Right ventricle myocardium inferior (tissue), 1 donor: ENCODE measurements at regions of chr3 and their contacts with region 1.

Region 1: GRCh38 chr3:29642393-29643033 is 361.6 kb downstream of the RBMS3 start:
- DNase-seq: peak; percentile 45
- ATAC-seq: peak; percentile 87

Region 2: GRCh38 chr3:29324180-29324651 is 318.3 kb before region 1 on chr3:
- intact Hi-C with region 1: no loop called
- DNase-seq: peak; percentile 60
- ATAC-seq: peak; percentile 73

Region 3: DNA sequence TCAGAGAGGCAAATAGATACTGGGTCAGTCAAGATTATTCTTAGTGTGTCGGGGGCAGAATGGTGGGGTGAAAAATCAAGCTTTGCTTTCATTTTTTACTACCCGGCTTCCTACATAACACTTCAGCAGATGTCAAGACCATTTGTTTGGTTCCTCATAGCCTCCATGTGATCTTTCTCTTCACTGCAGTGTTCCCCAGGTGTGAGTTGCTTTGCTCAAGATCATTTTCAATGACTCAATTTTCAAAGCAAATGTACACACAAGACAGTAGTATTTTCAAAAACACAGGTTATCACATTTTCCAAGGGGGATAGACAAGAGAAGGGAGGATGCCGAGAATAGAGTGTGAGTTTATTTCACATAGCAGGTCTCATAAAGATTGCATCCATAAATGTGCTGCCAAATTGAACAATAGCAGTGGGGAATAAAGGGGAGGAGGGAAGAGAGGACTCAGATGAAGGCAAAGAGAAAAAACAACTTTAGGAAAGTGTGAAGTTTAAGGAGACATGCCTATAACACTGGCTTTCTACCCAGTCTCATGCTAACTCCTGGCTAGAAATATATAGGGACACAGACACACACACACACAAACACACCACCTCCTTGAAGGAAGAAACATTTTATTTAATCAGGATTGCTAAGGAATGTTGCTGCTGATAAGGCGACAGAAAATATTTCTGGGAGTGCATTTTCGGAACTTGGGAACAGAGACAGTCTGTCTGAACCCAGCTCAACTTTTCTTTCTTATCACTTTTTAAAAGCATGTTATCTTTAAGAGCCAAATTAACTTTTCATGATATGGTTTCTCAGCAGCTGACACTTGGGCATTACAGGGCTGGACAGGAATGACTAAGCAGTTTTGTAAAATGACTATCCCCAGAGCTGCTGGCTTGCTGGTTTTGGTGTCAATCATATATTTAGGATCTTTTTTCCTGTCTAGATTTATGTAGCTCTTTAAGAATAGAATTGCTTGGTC is 40.8 kb after region 1 on chr3:
- intact Hi-C with region 1: loop called (anchors 5 kb)
- DNase-seq: no peak
- ATAC-seq: peak; percentile 81